ENCODE measurements at regions of chr5 and their contacts with region 1.

Region 1: GRCh38 chr5:112691758-112692157 is 45.9 kb upstream of the APC start:
- DNase-seq: peak; percentile 43
- H3K4me3 ChIP-seq: no peak overlapping the region
- H3K27ac ChIP-seq: no peak overlapping the region
- H3K4me1 ChIP-seq: no peaks in the 10 kb centered on the region
- H3K27me3 ChIP-seq: peaks cover 10 to 12% of the 10 kb centered on the region in 2 experiments
- CTCF ChIP-seq: peak; percentile 33 to 41
- POLR2A ChIP-seq: no peak

Region 2: GRCh38 chr5:112467485-112467884 is 224.3 kb before region 1 on chr5:
- CTCF ChIA-PET with region 1: no interaction called
- POLR2A ChIA-PET with region 1: no interaction called
- dilution Hi-C with region 1: no loop called
- intact Hi-C with region 1: no loop called
- DNase-seq: no peak
- H3K4me3 ChIP-seq: no peak overlapping the region
- H3K27ac ChIP-seq: no peak overlapping the region
- H3K4me1 ChIP-seq: peaks cover 8% of the 10 kb centered on the region
- H3K27me3 ChIP-seq: no peaks in the 10 kb centered on the region
- CTCF ChIP-seq: no peak
- POLR2A ChIP-seq: no peak

Region 3: GRCh38 chr5:112628219-112628980 is 63.4 kb before region 1 on chr5:
- CTCF ChIA-PET with region 1: no interaction called
- POLR2A ChIA-PET with region 1: no interaction called
- dilution Hi-C with region 1: no loop called
- intact Hi-C with region 1: no loop called
- DNase-seq: no peak
- H3K4me3 ChIP-seq: no peak overlapping the region
- H3K27ac ChIP-seq: no peak overlapping the region
- H3K4me1 ChIP-seq: no peaks in the 10 kb centered on the region
- H3K27me3 ChIP-seq: peaks cover 5 to 13% of the 10 kb centered on the region in 2 experiments
- CTCF ChIP-seq: no peak
- POLR2A ChIP-seq: no peak

Region 4: DNA sequence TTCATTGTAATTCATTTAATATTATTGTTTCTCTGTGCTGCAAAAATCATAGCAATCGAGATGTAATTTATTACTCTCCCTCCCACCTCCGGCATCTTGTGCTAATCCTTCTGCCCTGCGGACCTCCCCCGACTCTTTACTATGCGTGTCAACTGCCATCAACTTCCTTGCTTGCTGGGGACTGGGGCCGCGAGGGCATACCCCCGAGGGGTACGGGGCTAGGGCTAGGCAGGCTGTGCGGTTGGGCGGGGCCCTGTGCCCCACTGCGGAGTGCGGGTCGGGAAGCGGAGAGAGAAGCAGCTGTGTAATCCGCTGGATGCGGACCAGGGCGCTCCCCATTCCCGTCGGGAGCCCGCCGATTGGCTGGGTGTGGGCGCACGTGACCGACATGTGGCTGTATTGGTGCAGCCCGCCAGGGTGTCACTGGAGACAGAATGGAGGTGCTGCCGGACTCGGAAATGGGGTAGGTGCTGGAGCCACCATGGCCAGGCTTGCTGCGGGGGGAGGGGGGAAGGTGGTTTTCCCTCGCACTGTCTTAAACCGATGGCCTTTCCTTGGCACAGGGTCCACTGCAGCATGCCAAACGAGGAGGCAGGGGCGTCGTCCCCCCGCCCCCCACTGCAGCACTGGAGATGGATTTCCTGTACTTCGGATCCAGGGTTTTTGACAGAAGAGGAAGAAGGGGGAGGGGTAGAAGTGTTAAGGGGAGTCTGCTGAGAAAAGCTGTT is 45.9 kb after region 1 on chr5 and contains the start of gene APC:
- CTCF ChIA-PET with region 1: interaction called, 17 read pairs
- POLR2A ChIA-PET with region 1: no interaction called
- dilution Hi-C with region 1: no loop called
- intact Hi-C with region 1: no loop called
- DNase-seq: peak; percentile 91
- H3K4me3 ChIP-seq: peak within 1 kb of the TSS; percentile 57 to 83 (median 63)
- H3K27ac ChIP-seq: peak within 1 kb of the TSS; percentile 57
- H3K4me1 ChIP-seq: peaks cover 32% of the 10 kb centered on the region
- H3K27me3 ChIP-seq: no peaks in the 10 kb centered on the region
- CTCF ChIP-seq: no peak
- POLR2A ChIP-seq: peak; percentile 34
- total RNA-seq, gene APC: 39.6 and 42.0 TPM in 2 replicates

Measured in endothelial cell of umbilical vein (primary cell).